ENCODE measurements at regions of chr3 and their contacts with region 1.

Region 1: DNA sequence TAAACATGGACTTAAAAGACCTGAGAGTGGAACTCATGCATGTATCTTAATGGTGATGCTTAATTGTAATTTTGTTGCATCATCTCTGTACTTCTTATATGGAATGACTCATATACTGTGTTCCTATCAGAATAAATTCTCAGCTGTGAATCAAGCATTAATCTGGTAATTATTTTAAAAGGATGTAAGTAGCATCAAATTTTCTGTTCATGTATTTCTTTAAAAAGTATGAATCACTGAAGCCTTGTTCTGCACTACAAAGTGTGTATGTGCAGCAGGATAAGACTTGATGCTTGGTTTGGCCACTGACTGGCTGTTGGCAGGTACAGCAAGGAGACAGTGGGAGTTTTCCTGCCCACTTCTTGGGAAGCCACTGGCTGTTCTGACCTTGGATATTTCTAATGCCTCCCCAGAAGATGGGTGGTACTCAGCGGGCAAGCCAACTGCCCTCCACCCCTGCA is 123.9 kb downstream of the ANO10 start:
- DNase-seq: no peak

Region 2: GRCh38 chr3:42880601-42881451 is 617.1 kb before region 1 on chr3:
- intact Hi-C with region 1: no loop called
- DNase-seq: peak; percentile 96

Region 3: GRCh38 chr3:43473737-43474136 is 24.2 kb before region 1 on chr3:
- intact Hi-C with region 1: loop called in 1 of 2 experiments (anchors 1 kb)
- DNase-seq: no peak